ENCODE measurements at regions of chr18 and their contacts with region 1.

Region 1: DNA sequence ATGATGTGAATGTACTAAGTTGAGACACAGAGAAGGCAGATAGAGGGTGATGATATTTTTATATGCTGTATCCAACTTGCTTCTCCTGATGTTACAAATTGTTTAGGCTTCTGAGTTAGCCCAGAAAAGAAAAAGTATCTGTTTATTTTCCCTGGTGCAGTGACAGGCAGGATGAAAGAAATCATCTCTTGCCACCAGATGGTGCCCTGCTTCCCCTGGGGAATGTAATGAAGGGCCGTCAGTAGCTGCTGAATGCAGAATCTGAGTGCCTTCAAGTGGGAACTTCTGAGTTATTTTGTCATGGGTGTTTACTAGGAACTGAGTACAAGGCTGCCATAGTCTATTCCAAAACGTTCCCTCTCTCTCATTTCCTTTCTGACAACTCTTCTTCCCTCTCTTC is 525.6 kb downstream of the MBD2 start:
- DNase-seq: no peak
- ATAC-seq: peak; percentile 72
- H3K4me3 ChIP-seq: no peak overlapping the region
- H3K27ac ChIP-seq: no peak overlapping the region
- H3K4me1 ChIP-seq: no peaks in the 10 kb centered on the region
- H3K27me3 ChIP-seq: no peaks in the 10 kb centered on the region
- CTCF ChIP-seq: peak; percentile 30 to 44 (median 39); a peak in 5 of 6 replicates
- EP300 ChIP-seq: no peak
- POLR2A ChIP-seq: no peak
- RAD21 ChIP-seq: peak; percentile 35

Region 2: GRCh38 chr18:53715243-53715853 is 16.4 kb after region 1 on chr18:
- CTCF ChIA-PET with region 1: no interaction called
- POLR2A ChIA-PET with region 1: no interaction called
- RAD21 ChIA-PET with region 1: no interaction called
- SMC1A ChIA-PET with region 1: no interaction called
- in situ Hi-C with region 1: no loop called
- intact Hi-C with region 1: no loop called
- DNase-seq: no peak
- ATAC-seq: no peak
- H3K4me3 ChIP-seq: no peak overlapping the region
- H3K27ac ChIP-seq: no peak overlapping the region
- H3K4me1 ChIP-seq: no peaks in the 10 kb centered on the region
- H3K27me3 ChIP-seq: no peaks in the 10 kb centered on the region; a peak in 1 of 4 replicates
- CTCF ChIP-seq: no peak
- EP300 ChIP-seq: no peak
- POLR2A ChIP-seq: no peak
- RAD21 ChIP-seq: no peak

Region 3: GRCh38 chr18:54033052-54033451 is 334.1 kb after region 1 on chr18:
- CTCF ChIA-PET with region 1: no interaction called
- POLR2A ChIA-PET with region 1: no interaction called
- RAD21 ChIA-PET with region 1: no interaction called
- SMC1A ChIA-PET with region 1: no interaction called
- in situ Hi-C with region 1: no loop called
- intact Hi-C with region 1: no loop called
- DNase-seq: no peak
- ATAC-seq: no peak
- H3K4me3 ChIP-seq: no peak overlapping the region
- H3K27ac ChIP-seq: no peak overlapping the region
- H3K4me1 ChIP-seq: no peaks in the 10 kb centered on the region
- H3K27me3 ChIP-seq: no peaks in the 10 kb centered on the region
- CTCF ChIP-seq: no peak
- EP300 ChIP-seq: no peak
- POLR2A ChIP-seq: no peak
- RAD21 ChIP-seq: no peak

Region 4: GRCh38 chr18:54127759-54128378 is 429.0 kb after region 1 on chr18:
- CTCF ChIA-PET with region 1: interaction called, 6 read pairs
- POLR2A ChIA-PET with region 1: no interaction called
- RAD21 ChIA-PET with region 1: no interaction called
- SMC1A ChIA-PET with region 1: interaction called, 6 read pairs
- in situ Hi-C with region 1: loop called (anchors 5 kb)
- intact Hi-C with region 1: no loop called
- DNase-seq: no peak
- ATAC-seq: peak; percentile 90
- H3K4me3 ChIP-seq: no peak overlapping the region
- H3K27ac ChIP-seq: no peak overlapping the region
- H3K4me1 ChIP-seq: peaks cover 3% of the 10 kb centered on the region
- H3K27me3 ChIP-seq: no peaks in the 10 kb centered on the region
- CTCF ChIP-seq: peak; percentile 54 to 65 (median 57); a peak in 5 of 6 replicates
- EP300 ChIP-seq: no peak
- POLR2A ChIP-seq: no peak
- RAD21 ChIP-seq: peak; percentile 78

Measured in GM12878 (cell line).